ENCODE measurements at regions of chr12 and their contacts with region 1.

Region 1: GRCh38 chr12:20305470-20305869 is 62.9 kb upstream of the PDE3A start:
- DNase-seq: no peak
- ATAC-seq: no peak
- H3K4me3 ChIP-seq: no peak overlapping the region
- H3K27ac ChIP-seq: no peak overlapping the region
- H3K4me1 ChIP-seq: peaks cover 0 to 10% (median 0%) of the 10 kb centered on the region in 9 donors
- H3K27me3 ChIP-seq: no peaks in the 10 kb centered on the region
- CTCF ChIP-seq: no peak

Region 2: DNA sequence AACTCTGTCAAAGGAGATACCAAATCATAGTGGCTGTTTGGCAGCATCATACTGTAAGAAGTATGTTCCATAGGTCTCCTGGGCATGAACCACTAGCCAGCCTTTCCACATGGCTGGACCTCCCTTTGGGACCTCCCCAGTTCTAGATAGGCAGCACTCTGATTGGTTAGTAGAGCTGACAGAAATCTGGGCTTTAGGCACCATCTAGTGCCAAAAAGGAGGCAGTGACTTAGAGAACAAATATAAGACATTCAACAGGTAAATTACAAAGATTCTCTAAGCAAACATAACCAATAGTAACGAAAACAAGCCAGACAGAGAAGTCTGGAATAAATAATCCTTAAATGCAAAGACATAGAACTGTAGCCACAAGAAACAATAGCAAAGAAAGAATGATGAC is 85.1 kb before region 1 on chr12:
- intact Hi-C with region 1: no loop called
- DNase-seq: no peak
- ATAC-seq: peak in 2 of 8 donors; percentile 19 to 43
- H3K4me3 ChIP-seq: no peak overlapping the region
- H3K27ac ChIP-seq: no peak overlapping the region
- H3K4me1 ChIP-seq: no peaks in the 10 kb centered on the region
- H3K27me3 ChIP-seq: no peaks in the 10 kb centered on the region
- CTCF ChIP-seq: peak in 7 of 9 donors; percentile 11 to 34 (median 22)

Region 3: DNA sequence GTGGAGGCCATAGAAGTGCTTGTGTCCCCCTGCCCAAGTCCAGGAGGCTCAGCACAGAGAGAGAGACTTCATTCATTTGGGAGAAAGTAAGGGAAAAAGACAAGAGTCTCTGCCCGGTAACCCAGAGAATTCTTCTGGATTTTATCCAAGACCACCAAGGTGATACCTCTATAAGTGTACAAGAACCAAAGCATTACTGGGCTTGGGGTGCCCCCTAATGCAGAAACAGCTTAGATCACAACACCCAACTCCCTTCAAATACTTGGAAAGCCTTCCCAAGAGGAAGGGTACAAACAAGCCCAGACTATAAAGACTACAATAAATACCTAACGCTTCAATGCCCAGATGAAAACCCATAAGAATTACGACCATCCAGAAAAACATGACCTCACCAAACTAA is 56.8 kb before region 1 on chr12:
- intact Hi-C with region 1: loop called in 1 of 10 experiments (anchors 2 kb)
- DNase-seq: no peak
- ATAC-seq: no peak
- H3K4me3 ChIP-seq: no peak overlapping the region
- H3K27ac ChIP-seq: no peak overlapping the region
- H3K4me1 ChIP-seq: no peaks in the 10 kb centered on the region
- H3K27me3 ChIP-seq: no peaks in the 10 kb centered on the region
- CTCF ChIP-seq: no peak

Region 4: GRCh38 chr12:20477672-20478071 is 172.2 kb after region 1 on chr12:
- intact Hi-C with region 1: no loop called
- DNase-seq: no peak
- ATAC-seq: peak in 3 of 8 donors; percentile 13 to 38 (median 34)
- H3K4me3 ChIP-seq: no peak overlapping the region
- H3K27ac ChIP-seq: peak overlapping the region in 3 of 10 donors; percentile 1 to 12 (median 2)
- H3K4me1 ChIP-seq: peaks cover 9 to 78% (median 44%) of the 10 kb centered on the region in 9 donors
- H3K27me3 ChIP-seq: no peaks in the 10 kb centered on the region
- CTCF ChIP-seq: no peak

Measured in heart right ventricle (tissue), 16 donors.